Natural killer cell (primary cell): ENCODE measurements at regions of chr18 and their contacts with region 1.

Region 1: DNA sequence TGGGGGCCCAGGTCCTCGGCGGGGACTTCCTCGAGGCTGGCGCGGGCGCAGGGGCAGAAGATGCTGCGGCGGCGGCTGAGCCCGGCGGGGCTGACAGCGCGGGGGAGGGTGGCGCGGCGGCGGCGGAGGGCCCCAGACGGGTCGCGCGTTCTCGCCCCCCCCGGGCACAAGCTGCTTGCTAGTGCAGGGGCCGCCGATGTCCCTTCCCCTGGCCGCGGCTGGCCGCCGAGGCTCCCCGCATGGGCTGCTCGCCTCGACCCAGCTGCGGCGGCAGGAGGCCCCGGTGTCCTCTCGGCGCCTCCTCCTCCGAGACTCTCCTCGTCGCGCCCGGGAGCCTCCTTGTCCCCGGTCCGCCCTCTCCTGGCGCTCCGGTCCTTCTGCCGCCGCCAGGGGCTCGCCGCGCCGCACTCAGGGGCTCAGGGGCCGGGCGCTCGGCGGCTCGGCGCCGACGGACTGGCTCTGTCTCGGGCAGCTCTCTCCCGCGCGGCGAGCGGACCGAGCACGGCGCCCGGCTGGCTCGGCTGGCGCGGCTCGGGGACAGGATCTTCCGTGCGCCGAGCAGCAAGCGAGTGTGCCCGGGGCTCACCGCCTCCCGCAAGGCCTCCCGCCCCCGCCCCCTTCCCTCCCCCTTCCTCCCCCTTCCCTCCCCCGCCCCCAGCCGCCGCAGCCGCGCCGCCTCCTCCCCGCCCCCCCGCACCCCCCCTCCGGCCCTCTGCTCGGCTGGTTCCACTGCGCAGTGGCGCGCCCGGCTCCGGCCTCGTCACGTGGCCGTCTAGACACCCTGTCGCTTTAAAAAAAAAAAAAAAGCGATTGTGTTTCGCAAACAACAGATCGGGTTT is 902 bp upstream of the SMAD7 start:
- DNase-seq: peak; percentile 75 to 91
- ATAC-seq: peak; percentile 45 to 78 (median 59)
- H3K4me3 ChIP-seq: peak overlapping the region; percentile 85
- H3K4me3 Mint-ChIP-seq: peak overlapping the region; percentile 100
- H3K27ac ChIP-seq: peak overlapping the region; percentile 97
- H3K27ac Mint-ChIP-seq: peak overlapping the region; percentile 95 to 99
- H3K4me1 ChIP-seq: peaks cover 30% of the 10 kb centered on the region
- H3K4me1 Mint-ChIP-seq: peaks cover 39 to 45% of the 10 kb centered on the region in 2 donors
- H3K27me3 ChIP-seq: no peaks in the 10 kb centered on the region
- H3K27me3 Mint-ChIP-seq: no peaks in the 10 kb centered on the region
- CTCF ChIP-seq: no peak

Region 2: GRCh38 chr18:48777026-48777743 is 174.5 kb before region 1 on chr18:
- intact Hi-C with region 1: loop called (anchors 5 kb)
- DNase-seq: peak; percentile 76 to 85
- ATAC-seq: peak; percentile 82 to 96 (median 94)
- H3K4me3 ChIP-seq: no peak overlapping the region
- H3K4me3 Mint-ChIP-seq: no peak overlapping the region
- H3K27ac ChIP-seq: no peak overlapping the region
- H3K27ac Mint-ChIP-seq: peak overlapping the region in 1 of 2 donors; percentile 48
- H3K4me1 ChIP-seq: peaks cover 30% of the 10 kb centered on the region
- H3K4me1 Mint-ChIP-seq: peaks cover 0 to 22% of the 10 kb centered on the region in 2 donors
- H3K27me3 ChIP-seq: no peaks in the 10 kb centered on the region
- H3K27me3 Mint-ChIP-seq: peaks cover 0 to 7% of the 10 kb centered on the region in 2 donors
- CTCF ChIP-seq: peak; percentile 94

Region 3: GRCh38 chr18:48868468-48869466 is 82.9 kb before region 1 on chr18:
- intact Hi-C with region 1: loop called (anchors 2 kb)
- DNase-seq: peak; percentile 57 to 73
- ATAC-seq: peak; percentile 74 to 91 (median 85)
- H3K4me3 ChIP-seq: no peak overlapping the region
- H3K4me3 Mint-ChIP-seq: peak overlapping the region; percentile 76
- H3K27ac ChIP-seq: peak overlapping the region; percentile 83
- H3K27ac Mint-ChIP-seq: peak overlapping the region; percentile 88 to 92
- H3K4me1 ChIP-seq: peaks cover 56% of the 10 kb centered on the region
- H3K4me1 Mint-ChIP-seq: peaks cover 28 to 47% of the 10 kb centered on the region in 2 donors
- H3K27me3 ChIP-seq: no peaks in the 10 kb centered on the region
- H3K27me3 Mint-ChIP-seq: no peaks in the 10 kb centered on the region
- CTCF ChIP-seq: no peak

Region 4: DNA sequence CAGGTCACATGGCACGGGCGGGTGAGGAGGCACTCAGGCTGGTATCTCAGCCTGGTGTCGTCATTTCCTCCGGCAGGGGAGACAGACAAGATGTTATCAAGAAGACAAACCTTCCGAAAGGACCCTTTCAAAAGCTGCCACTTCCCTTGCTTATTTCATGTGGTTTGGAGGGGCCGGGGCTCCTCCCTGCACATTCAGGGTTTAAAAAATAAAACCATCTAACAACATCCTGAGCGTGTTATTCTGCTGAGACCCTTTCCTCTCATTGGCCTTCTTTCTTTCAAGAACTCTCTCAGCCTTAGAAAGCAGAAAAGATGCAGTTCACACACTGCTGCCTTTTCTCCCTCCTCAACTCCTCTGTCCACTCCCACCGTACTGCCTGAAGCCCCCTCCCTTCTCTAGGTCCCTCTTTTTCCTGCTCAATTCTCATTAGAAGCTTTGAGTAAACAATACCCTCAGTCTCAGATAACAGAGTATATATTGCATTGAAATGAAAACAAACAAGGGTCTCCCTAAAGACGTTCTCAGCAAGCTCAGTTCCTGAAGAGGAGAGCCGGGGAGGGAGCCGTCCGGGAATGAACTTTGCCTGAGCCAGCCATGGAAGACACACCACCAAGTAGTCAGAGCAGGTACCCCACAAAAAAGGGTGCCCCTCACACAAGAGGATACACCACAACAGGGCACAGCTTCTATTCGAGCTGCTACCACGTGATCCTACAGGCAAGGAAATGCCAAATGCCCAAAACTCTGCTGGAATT is 10.6 kb before region 1 on chr18:
- intact Hi-C with region 1: loop called (anchors 1 kb)
- DNase-seq: peak; percentile 76 to 98
- ATAC-seq: peak; percentile 76 to 91 (median 84)
- H3K4me3 ChIP-seq: peak overlapping the region; percentile 1
- H3K4me3 Mint-ChIP-seq: peak overlapping the region; percentile 88
- H3K27ac ChIP-seq: peak overlapping the region; percentile 79
- H3K27ac Mint-ChIP-seq: peak overlapping the region; percentile 95 to 99
- H3K4me1 ChIP-seq: peaks cover 99% of the 10 kb centered on the region
- H3K4me1 Mint-ChIP-seq: peaks cover 89 to 95% of the 10 kb centered on the region in 2 donors
- H3K27me3 ChIP-seq: no peaks in the 10 kb centered on the region
- H3K27me3 Mint-ChIP-seq: no peaks in the 10 kb centered on the region
- CTCF ChIP-seq: no peak

Region 5: DNA sequence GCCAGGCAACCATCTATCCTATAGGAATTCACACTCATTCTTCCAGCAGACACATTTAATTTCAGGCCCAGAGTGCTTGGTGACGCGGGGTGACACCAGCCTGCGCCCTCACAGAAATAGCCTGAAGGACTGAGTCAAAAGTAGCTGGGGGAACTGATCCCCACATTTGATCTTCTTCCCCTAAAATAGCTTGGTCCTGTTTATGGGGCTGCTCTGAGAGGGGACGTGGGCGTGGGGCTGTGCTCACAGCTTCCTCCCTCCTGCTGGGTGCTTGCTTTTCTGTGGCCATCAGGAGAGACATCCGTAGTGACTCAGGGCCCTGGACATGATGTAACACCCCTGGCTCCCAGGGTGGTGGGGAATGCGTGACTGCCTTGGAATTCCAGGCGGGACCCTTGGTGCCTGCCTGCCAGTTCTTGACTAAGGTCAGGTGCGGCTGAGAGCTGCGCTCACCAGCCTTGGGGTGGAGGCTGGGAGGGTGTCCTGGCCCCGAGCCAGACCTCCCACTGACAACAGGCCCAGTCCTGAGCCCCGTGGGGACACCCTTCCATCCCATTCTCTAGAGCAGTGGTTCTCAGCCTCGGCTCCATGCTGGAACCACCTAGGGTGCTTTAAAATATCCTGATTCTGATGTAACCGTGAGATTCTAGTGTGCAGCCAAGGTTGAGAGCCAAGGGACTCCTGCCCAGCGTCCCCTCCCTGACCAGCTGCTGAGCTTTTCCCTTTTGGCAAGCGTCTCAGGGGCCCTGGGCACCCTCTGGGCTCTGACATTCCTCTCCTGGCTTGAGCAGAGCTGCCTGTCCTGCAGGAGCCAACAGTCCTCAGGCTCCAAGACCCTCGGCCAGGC is 46.5 kb after region 1 on chr18:
- intact Hi-C with region 1: no loop called
- DNase-seq: no peak
- ATAC-seq: no peak
- H3K4me3 ChIP-seq: no peak overlapping the region
- H3K4me3 Mint-ChIP-seq: no peak overlapping the region
- H3K27ac ChIP-seq: no peak overlapping the region
- H3K27ac Mint-ChIP-seq: no peak overlapping the region
- H3K4me1 ChIP-seq: peaks cover 9% of the 10 kb centered on the region
- H3K4me1 Mint-ChIP-seq: peaks cover 8 to 13% of the 10 kb centered on the region in 2 donors
- H3K27me3 ChIP-seq: no peaks in the 10 kb centered on the region
- H3K27me3 Mint-ChIP-seq: peaks cover under 1 to 4% of the 10 kb centered on the region in 2 donors
- CTCF ChIP-seq: no peak

Region 6: DNA sequence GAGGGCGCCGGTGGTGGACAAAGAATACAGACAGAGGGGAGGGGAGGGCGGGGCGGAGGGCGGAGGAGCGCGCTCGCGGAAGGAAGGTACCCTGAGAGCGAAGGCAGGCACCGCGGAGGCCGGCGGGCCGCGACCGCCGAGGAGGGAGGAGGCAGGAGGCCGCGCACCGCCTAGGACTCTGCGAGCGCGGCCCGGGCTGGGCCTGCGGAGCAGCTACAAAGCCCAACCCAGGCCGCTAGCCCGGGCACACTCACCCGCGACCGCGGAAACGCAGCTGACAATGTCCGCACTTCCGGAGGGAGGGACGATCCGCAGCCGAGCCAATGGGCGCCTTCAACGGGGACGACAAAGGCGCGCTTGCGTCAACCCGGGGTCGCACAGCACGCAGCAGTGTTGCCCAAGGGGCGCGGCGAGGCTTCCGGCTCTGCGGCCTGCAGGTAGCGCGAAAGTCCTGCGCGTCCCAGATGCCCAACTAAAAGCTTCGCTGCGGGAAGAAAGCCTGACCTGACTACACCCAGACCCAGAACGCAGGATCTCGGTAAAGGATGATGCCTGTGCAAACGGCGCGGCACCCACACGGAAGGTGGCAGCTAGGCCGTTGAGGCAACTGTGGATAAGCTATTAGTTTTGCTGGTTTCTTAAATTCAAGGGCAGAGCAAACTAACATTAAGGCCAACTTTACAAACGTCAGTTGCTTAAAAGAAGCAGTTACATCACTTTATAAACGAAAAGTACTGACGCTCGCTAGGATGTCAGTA is 535.5 kb after region 1 on chr18 and contains the start of gene C18orf32:
- intact Hi-C with region 1: loop called (anchors 2 kb)
- DNase-seq: peak; percentile 94 to 96
- ATAC-seq: peak; percentile 89 to 97 (median 92)
- H3K4me3 ChIP-seq: peak within 1 kb of the TSS; percentile 81
- H3K4me3 Mint-ChIP-seq: peak within 1 kb of the TSS; percentile 88
- H3K27ac ChIP-seq: peak within 1 kb of the TSS; percentile 93
- H3K27ac Mint-ChIP-seq: peak within 1 kb of the TSS; percentile 95 to 97
- H3K4me1 ChIP-seq: peaks cover 27% of the 10 kb centered on the region
- H3K4me1 Mint-ChIP-seq: peaks cover 49 to 67% of the 10 kb centered on the region in 2 donors
- H3K27me3 ChIP-seq: no peaks in the 10 kb centered on the region
- H3K27me3 Mint-ChIP-seq: no peaks in the 10 kb centered on the region
- CTCF ChIP-seq: no peak
- total RNA-seq, gene C18orf32: 18.8 to 28.0 (median 23.9) TPM

Region 7: DNA sequence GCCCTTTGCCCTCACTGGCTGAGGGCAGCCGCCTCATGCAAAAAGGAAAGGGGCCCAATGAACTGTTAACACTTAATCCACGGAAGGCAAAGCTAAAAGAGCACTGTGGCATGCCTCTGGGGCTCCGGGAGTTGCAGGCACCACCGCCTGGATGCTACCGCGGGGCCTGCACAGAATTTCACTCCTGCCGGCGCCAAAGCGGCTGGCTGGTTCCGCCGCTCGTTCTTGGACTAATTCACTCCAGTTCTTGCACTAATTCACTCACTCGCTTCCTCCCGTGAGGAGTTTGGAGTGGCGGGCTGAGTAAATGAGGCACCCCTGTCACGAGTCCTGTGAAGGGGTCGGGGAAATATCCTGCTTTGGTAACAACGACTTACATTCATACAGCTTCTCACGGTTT is 1594.3 kb after region 1 on chr18:
- intact Hi-C with region 1: no loop called
- DNase-seq: no peak
- ATAC-seq: no peak
- H3K4me3 ChIP-seq: no peak overlapping the region
- H3K4me3 Mint-ChIP-seq: no peak overlapping the region
- H3K27ac ChIP-seq: no peak overlapping the region
- H3K27ac Mint-ChIP-seq: no peak overlapping the region
- H3K4me1 ChIP-seq: no peaks in the 10 kb centered on the region
- H3K4me1 Mint-ChIP-seq: no peaks in the 10 kb centered on the region
- H3K27me3 ChIP-seq: no peaks in the 10 kb centered on the region
- H3K27me3 Mint-ChIP-seq: peaks cover 5 to 7% of the 10 kb centered on the region in 2 donors
- CTCF ChIP-seq: no peak